Activated CD4-positive, alpha-beta memory T cell treated with anti-CD3 and anti-CD28 coated beads for 36 hours (primary cell): ENCODE measurements at regions of chr12 and their contacts with region 1.

Region 1: DNA sequence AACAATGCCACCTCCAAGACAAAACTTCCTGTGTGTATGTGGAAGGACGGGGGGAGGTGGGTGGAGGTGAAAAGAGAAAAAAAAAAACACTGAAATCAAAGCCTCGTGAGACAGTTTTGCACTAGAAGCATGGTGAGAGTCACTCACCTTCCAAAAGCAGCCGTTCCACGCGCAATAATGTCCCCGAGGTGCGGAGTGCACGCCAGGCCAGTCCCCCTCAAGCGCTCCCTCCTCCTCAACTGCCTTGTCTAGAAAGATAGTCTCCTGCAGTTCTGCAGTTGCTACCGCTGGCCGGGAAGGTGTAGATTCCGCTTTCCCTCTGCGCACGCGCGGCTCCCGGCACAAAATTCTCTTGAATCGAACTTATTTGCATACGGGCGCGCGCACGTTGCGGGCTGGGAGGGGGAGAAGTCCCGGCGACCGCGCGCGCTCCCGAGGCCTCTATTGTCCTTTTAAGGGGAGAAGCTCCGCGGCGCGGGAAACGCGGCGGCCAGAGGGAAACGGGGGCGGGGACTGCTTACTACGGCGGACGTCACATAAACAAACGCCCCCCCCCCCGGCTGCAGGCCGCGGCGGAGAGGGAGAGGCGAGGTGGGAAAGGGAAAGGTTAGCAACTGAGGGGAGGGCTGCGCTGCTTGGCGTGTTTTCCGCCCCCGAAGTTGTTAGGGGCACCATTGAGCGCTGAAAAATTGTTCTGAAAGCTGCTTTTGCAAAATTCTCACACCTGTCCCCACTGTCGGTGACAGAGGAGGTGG is at the start of gene SINHCAF:
- DNase-seq: peak; percentile 99
- H3K4me3 Mint-ChIP-seq: peak within 1 kb of the TSS; percentile 100
- H3K27ac Mint-ChIP-seq: peak within 1 kb of the TSS; percentile 99
- H3K4me1 Mint-ChIP-seq: peaks cover 24% of the 10 kb centered on the region
- H3K27me3 Mint-ChIP-seq: peaks cover 2% of the 10 kb centered on the region
- total RNA-seq, gene SINHCAF: 181 to 186 TPM

Region 2: GRCh38 chr12:31057671-31058070 is 268.4 kb before region 1 on chr12:
- CTCF ChIA-PET with region 1: no interaction called
- POLR2A ChIA-PET with region 1: no interaction called
- intact Hi-C with region 1: no loop called
- DNase-seq: no peak
- H3K4me3 Mint-ChIP-seq: no peak overlapping the region
- H3K27ac Mint-ChIP-seq: no peak overlapping the region
- H3K4me1 Mint-ChIP-seq: peaks cover 1% of the 10 kb centered on the region
- H3K27me3 Mint-ChIP-seq: no peaks in the 10 kb centered on the region

Region 3: DNA sequence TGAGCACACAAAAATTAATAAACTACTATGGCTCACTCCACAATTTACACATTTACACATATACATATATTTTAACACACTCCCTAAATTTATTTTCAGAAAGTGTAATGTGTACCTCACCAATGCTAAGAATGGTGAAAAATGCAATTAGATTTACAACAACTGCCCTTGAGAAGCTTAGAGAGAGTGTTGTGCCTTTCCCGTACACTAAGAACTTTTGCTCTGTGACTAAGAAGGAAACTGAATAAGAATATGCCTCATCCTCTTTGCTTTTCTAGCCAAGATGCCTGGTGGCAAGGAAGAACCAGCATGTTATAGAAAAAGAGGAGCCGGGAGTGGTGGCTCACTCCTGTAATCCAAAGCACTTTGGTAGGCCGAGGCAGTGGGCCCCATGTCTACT is 62.4 kb before region 1 on chr12:
- CTCF ChIA-PET with region 1: no interaction called
- POLR2A ChIA-PET with region 1: no interaction called
- intact Hi-C with region 1: no loop called
- DNase-seq: no peak
- H3K4me3 Mint-ChIP-seq: no peak overlapping the region
- H3K27ac Mint-ChIP-seq: no peak overlapping the region
- H3K4me1 Mint-ChIP-seq: peaks cover 5% of the 10 kb centered on the region
- H3K27me3 Mint-ChIP-seq: no peaks in the 10 kb centered on the region

Region 4: DNA sequence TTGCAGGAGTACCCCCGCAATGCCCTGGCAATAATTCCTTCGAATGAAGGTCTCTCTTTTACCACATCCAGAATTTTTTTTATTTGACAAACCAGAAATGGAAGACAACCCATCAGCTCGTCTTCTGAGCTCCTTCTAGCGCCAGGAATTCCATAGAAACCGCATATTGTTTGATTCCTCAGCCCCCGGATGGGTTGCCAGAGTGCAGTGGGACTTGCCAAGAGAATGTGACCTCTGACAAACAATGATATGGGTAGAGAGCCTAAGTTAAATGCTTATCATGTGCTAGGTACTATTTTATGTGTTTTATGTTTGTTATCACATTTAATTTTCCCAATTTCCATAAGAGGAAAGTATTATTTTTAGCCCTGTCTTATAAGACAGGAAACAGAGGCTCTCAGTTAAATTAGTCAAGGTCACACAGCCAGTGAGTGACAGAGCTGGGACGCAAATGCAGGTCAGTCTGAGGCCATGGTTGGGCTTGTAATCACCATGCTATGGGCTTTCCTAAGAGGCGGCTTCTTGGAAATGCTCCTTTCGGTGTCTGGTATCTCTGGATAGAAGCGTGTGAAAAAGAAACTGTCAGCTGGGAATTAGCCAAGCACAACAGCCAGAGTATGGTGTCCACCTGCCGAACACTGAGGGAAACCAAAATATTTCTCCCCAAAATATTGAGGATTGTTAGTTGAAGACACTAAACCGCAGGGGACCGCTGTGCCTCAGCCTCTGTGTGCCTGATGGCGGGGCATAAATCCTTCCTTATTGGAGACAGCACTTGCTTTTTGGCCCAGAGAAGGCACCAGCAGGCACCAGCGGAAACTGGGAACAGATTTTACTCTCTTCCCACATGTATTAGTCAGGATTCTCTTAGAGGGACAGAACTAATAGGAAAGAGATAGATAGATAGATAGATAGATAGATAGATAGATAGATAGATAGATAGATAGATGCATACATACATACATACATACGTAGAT is 304.0 kb after region 1 on chr12:
- CTCF ChIA-PET with region 1: no interaction called
- POLR2A ChIA-PET with region 1: no interaction called
- intact Hi-C with region 1: no loop called
- DNase-seq: no peak
- H3K4me3 Mint-ChIP-seq: no peak overlapping the region
- H3K27ac Mint-ChIP-seq: no peak overlapping the region
- H3K4me1 Mint-ChIP-seq: no peaks in the 10 kb centered on the region
- H3K27me3 Mint-ChIP-seq: peaks cover 1% of the 10 kb centered on the region

Region 5: DNA sequence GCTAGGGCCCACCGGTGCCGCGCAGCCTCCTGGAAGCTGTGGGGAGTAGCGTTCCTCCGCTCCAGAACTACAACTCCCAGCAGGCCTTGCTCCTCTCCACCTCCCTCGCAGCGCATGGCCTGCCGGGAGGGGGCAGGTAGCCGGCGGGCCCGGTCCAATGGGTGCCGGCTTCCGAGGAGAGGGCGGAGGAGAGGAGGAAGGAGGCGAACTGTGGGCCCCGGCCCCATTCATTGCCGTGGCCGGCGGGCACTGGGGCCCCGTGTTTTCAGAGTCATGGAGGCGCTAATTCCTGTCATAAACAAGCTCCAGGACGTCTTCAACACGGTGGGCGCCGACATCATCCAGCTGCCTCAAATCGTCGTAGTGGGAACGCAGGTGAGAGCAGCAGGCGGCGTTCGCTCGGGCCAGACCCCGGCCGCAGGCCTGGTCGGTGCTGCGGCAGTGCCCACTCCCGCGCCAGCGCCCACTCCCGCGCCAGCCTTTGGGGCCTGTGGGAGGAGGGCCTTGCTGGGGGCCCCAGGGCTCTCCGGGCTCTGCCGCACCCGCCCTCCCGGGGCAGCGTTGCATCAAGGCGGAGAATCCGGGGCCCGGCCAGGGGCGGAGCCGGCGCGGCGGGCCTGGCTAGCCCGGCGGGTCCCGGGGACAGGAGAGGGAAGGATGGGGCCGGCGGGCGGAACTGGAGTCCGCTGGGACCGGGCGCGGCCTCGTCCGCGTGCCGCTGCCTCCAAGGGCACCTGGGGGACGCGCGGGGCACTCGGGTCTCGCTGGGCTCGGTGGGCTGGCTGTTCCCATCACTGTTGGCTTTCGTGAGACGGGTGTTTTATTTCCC is 1353.3 kb after region 1 on chr12 and contains the start of gene DNM1L:
- CTCF ChIA-PET with region 1: no interaction called
- POLR2A ChIA-PET with region 1: no interaction called
- intact Hi-C with region 1: loop called (anchors 10 kb)
- DNase-seq: peak; percentile 94
- H3K4me3 Mint-ChIP-seq: peak within 1 kb of the TSS; percentile 87
- H3K27ac Mint-ChIP-seq: peak within 1 kb of the TSS; percentile 85
- H3K4me1 Mint-ChIP-seq: peaks cover 15% of the 10 kb centered on the region
- H3K27me3 Mint-ChIP-seq: no peaks in the 10 kb centered on the region
- total RNA-seq, gene DNM1L: 59.0 to 62.5 TPM